ENCODE measurements at regions of chr16 and their contacts with region 1.

Region 1: GRCh38 chr16:60107437-60107836 is 1373.3 kb upstream of the GOT2 start:
- DNase-seq: peak; percentile 83
- H3K4me3 ChIP-seq: no peak overlapping the region
- H3K27ac ChIP-seq: no peak overlapping the region
- H3K4me1 ChIP-seq: peaks cover 10% of the 10 kb centered on the region
- H3K27me3 ChIP-seq: no peaks in the 10 kb centered on the region
- CTCF ChIP-seq: no peak
- POLR2A ChIP-seq: no peak

Region 2: DNA sequence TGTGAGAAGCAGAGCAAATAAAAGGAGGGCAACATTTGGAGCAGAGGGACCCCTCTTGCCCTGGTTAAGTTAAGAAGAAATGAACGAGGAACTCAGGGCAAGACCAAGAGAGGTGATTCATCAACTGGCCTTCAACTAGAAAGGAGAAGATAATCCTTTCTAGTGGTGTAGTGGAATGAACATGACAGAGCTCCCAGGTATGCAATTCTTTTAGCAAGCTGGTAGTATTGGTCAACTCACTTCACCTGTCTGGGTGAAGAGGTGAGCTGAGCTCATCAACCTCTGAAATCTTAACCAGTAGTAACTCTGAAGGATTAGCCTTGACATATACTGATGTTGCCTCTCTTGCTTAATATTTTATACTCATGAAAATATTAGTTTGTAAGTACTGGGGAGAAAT is 348.6 kb before region 1 on chr16:
- CTCF ChIA-PET with region 1: no interaction called
- POLR2A ChIA-PET with region 1: no interaction called
- dilution Hi-C with region 1: no loop called
- intact Hi-C with region 1: no loop called
- DNase-seq: no peak
- H3K4me3 ChIP-seq: no peak overlapping the region
- H3K27ac ChIP-seq: no peak overlapping the region
- H3K4me1 ChIP-seq: no peaks in the 10 kb centered on the region
- H3K27me3 ChIP-seq: no peaks in the 10 kb centered on the region
- CTCF ChIP-seq: no peak
- POLR2A ChIP-seq: no peak

Region 3: DNA sequence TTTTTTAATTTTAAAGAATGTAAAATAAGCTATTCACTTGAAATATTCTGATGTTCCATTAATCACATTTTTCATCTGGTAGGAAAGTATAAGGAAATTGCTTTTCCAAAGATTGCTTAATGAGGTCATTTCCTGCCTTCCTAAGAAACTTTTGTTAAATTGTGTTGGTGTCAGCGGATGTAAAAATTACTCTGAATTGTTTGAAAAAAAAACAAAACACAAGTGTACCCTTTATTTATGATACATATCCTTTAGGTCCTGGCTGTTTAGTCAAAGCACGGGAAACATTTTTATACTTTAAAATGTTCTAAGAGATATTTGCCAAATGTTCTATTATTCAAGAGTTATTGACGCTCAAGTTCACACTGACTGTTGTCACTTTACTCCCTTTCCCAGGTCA is 15.9 kb before region 1 on chr16:
- CTCF ChIA-PET with region 1: interaction called, 8 read pairs
- POLR2A ChIA-PET with region 1: no interaction called
- dilution Hi-C with region 1: no loop called
- intact Hi-C with region 1: loop called (anchors 1 kb)
- DNase-seq: peak; percentile 88
- H3K4me3 ChIP-seq: peak overlapping the region in 1 of 3 experiments; percentile 28
- H3K27ac ChIP-seq: peak overlapping the region; percentile 90
- H3K4me1 ChIP-seq: peaks cover 24% of the 10 kb centered on the region
- H3K27me3 ChIP-seq: no peaks in the 10 kb centered on the region
- CTCF ChIP-seq: no peak
- POLR2A ChIP-seq: no peak

Region 4: GRCh38 chr16:60586493-60586892 is 479.1 kb after region 1 on chr16:
- CTCF ChIA-PET with region 1: no interaction called
- POLR2A ChIA-PET with region 1: no interaction called
- dilution Hi-C with region 1: no loop called
- intact Hi-C with region 1: loop called (anchors 5 kb)
- DNase-seq: no peak
- H3K4me3 ChIP-seq: no peak overlapping the region
- H3K27ac ChIP-seq: no peak overlapping the region
- H3K4me1 ChIP-seq: no peaks in the 10 kb centered on the region
- H3K27me3 ChIP-seq: no peaks in the 10 kb centered on the region
- CTCF ChIP-seq: no peak
- POLR2A ChIP-seq: no peak